A673 (cell line): ENCODE measurements at regions of chrX and their contacts with region 1.

Region 1: GRCh38 chrX:72271091-72271490 is 6.0 kb downstream of the RPS4X start:
- DNase-seq: no peak
- H3K4me3 ChIP-seq: no peak overlapping the region
- H3K27ac ChIP-seq: no peak overlapping the region
- H3K4me1 ChIP-seq: peaks cover 7% of the 10 kb centered on the region
- H3K27me3 ChIP-seq: no peaks in the 10 kb centered on the region
- CTCF ChIP-seq: no peak

Region 2: GRCh38 chrX:72142794-72143608 is 128.1 kb before region 1 on chrX:
- CTCF ChIA-PET with region 1: no interaction called
- POLR2A ChIA-PET with region 1: interaction called, 11 read pairs
- intact Hi-C with region 1: no loop called
- DNase-seq: no peak
- H3K4me3 ChIP-seq: no peak overlapping the region
- H3K27ac ChIP-seq: no peak overlapping the region
- H3K4me1 ChIP-seq: no peaks in the 10 kb centered on the region
- H3K27me3 ChIP-seq: peaks cover 12% of the 10 kb centered on the region
- CTCF ChIP-seq: no peak